CD14-positive monocyte (primary cell): ENCODE measurements at regions of chr1 and their contacts with region 1.

Region 1: GRCh38 chr1:23800400-23801337 is at the start of gene GALE:
- DNase-seq: peak; percentile 92 to 97 (median 95)
- H3K4me3 ChIP-seq: peak within 1 kb of the TSS; percentile 62 to 88 (median 85)
- H3K4me3 Mint-ChIP-seq: peak within 1 kb of the TSS; percentile 89 to 95
- H3K27ac ChIP-seq: peak within 1 kb of the TSS; percentile 67 to 97
- H3K27ac Mint-ChIP-seq: peak within 1 kb of the TSS; percentile 91 to 97 (median 93)
- H3K4me1 ChIP-seq: peaks cover 43 to 52% of the 10 kb centered on the region in 2 donors
- H3K4me1 Mint-ChIP-seq: peaks cover 48% of the 10 kb centered on the region
- H3K27me3 ChIP-seq: no peaks in the 10 kb centered on the region
- H3K27me3 Mint-ChIP-seq: peaks cover 0 to 3% (median 3%) of the 10 kb centered on the region in 3 donors
- CTCF ChIP-seq: no peak
- polyA plus RNA-seq, gene GALE: 17.6 to 21.9 (median 18.0) TPM

Region 2: GRCh38 chr1:23777979-23778814 is 22.5 kb before region 1 on chr1 and contains the start of gene PITHD1:
- intact Hi-C with region 1: loop called in 1 of 2 experiments (anchors 2 kb)
- DNase-seq: peak; percentile 83 to 87 (median 83)
- H3K4me3 ChIP-seq: peak within 1 kb of the TSS; percentile 71 to 96 (median 89)
- H3K4me3 Mint-ChIP-seq: peak within 1 kb of the TSS; percentile 85 to 97
- H3K27ac ChIP-seq: peak within 1 kb of the TSS; percentile 83 to 99
- H3K27ac Mint-ChIP-seq: peak within 1 kb of the TSS; percentile 96 to 98 (median 97)
- H3K4me1 ChIP-seq: peaks cover 23 to 28% of the 10 kb centered on the region in 2 donors
- H3K4me1 Mint-ChIP-seq: peaks cover 25% of the 10 kb centered on the region
- H3K27me3 ChIP-seq: no peaks in the 10 kb centered on the region
- H3K27me3 Mint-ChIP-seq: no peaks in the 10 kb centered on the region
- CTCF ChIP-seq: no peak
- polyA plus RNA-seq, gene PITHD1: 20.8 to 40.8 (median 29.9) TPM